Sciatic nerve (tissue), 2 donors: ENCODE measurements at regions of chr13 and their contacts with region 1.

Region 1: DNA sequence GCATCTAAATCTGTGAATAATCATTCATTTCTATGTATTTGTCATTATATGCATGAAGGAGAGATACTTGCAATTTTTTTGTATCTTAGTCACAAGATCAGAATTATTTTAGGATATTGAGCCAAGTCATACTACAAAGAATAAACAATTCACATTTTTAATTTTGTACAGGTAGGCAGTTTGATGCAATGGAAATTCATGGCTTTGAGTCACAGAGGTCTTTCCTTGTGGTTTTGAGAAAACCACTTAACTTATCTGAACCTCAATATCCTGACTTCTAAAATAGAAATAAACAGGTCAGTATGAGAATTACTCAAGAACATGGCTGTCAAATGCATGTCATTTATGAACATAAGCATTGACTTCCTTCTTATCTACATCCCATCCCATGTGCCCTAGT is 221.4 kb upstream of the SLC10A2 start:
- DNase-seq: no peak
- ATAC-seq: no peak

Region 2: GRCh38 chr13:103315711-103316110 is 28.1 kb after region 1 on chr13:
- intact Hi-C with region 1: loop called (anchors 1 kb)
- DNase-seq: no peak
- ATAC-seq: no peak